Activated naive CD4-positive, alpha-beta T cell treated with anti-CD3 and anti-CD28 coated beads for 36 hours (primary cell): ENCODE measurements at regions of chr9 and their contacts with region 1.

Region 1: DNA sequence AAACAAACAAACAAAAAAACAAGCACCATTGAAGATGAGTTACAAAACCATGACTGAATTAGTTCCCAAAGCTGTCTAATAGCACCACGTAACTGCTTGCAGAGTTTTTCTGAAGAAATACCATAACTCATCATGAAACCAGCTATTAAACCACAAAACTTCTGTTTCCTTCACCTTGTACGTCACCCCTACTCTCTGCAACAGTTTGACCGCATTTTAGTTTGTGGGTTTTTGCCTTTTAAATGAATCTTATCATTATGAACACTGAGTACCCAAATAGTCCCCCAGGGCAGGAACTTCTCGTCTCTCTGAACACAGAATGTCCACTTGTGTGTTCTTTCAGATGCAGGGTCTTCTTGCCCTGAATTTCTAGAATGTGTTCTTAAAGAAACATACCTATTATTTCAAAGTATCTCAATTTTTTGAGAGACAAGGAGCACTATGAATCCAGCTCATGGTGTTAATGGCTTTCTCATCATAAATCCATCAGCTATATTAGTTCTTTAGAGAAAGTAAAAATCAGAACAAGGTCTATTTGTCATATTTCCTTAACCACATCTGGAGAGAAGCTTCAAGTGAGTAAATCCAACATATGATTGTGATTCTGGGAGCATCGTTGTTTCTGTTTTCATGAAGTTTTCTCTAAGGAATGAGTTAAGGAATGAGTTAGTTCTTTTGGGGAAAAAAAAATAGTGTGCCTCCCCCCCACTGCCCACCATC is 210.6 kb downstream of the AUH start:
- DNase-seq: peak; percentile 66
- H3K4me3 Mint-ChIP-seq: peak overlapping the region; percentile 15
- H3K27ac Mint-ChIP-seq: peak overlapping the region; percentile 89
- H3K4me1 Mint-ChIP-seq: peaks cover 62% of the 10 kb centered on the region
- H3K27me3 Mint-ChIP-seq: peaks cover 2% of the 10 kb centered on the region

Region 2: GRCh38 chr9:91071185-91071990 is 79.8 kb before region 1 on chr9:
- CTCF ChIA-PET with region 1: interaction called, 3 read pairs
- intact Hi-C with region 1: loop called (anchors 1 kb)
- DNase-seq: peak; percentile 85
- H3K4me3 Mint-ChIP-seq: no peak overlapping the region
- H3K27ac Mint-ChIP-seq: peak overlapping the region; percentile 57
- H3K4me1 Mint-ChIP-seq: peaks cover 11% of the 10 kb centered on the region
- H3K27me3 Mint-ChIP-seq: peaks cover 13% of the 10 kb centered on the region

Region 3: DNA sequence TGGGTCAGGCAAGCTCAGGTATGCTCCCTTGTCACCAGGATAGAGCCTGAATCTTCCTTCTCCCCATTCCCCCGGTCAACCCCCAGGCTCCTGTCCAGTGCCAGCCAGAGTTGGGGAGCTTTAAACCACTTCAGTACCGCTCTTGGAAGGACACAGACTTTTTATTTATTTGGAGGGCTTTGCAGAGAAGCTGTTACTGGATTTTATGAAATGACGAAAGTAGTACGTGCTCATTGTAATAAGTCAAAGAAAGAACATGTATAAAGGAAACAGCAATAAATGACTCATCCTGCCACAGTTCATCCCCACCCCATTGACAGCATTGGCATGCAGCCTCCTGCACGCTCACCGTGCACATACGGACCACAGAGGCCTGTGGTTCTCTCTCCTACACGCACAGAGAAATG is 19.7 kb before region 1 on chr9:
- CTCF ChIA-PET with region 1: interaction called, 10 read pairs
- intact Hi-C with region 1: loop called (anchors 1 kb)
- DNase-seq: peak; percentile 86
- H3K4me3 Mint-ChIP-seq: no peak overlapping the region
- H3K27ac Mint-ChIP-seq: peak overlapping the region; percentile 82
- H3K4me1 Mint-ChIP-seq: peaks cover 15% of the 10 kb centered on the region
- H3K27me3 Mint-ChIP-seq: peaks cover 11% of the 10 kb centered on the region

Region 4: GRCh38 chr9:91359734-91360470 is 208.7 kb after region 1 on chr9:
- CTCF ChIA-PET with region 1: interaction called, 7 read pairs
- intact Hi-C with region 1: loop called (anchors 1 kb)
- DNase-seq: no peak
- H3K4me3 Mint-ChIP-seq: peak overlapping the region; percentile 91
- H3K27ac Mint-ChIP-seq: peak overlapping the region; percentile 54
- H3K4me1 Mint-ChIP-seq: peaks cover 47% of the 10 kb centered on the region
- H3K27me3 Mint-ChIP-seq: no peaks in the 10 kb centered on the region

Region 5: GRCh38 chr9:91415290-91415689 is 264.1 kb after region 1 on chr9:
- CTCF ChIA-PET with region 1: no interaction called
- intact Hi-C with region 1: loop called (anchors 1 kb)
- DNase-seq: peak; percentile 56
- H3K4me3 Mint-ChIP-seq: no peak overlapping the region
- H3K27ac Mint-ChIP-seq: peak overlapping the region; percentile 80
- H3K4me1 Mint-ChIP-seq: peaks cover 69% of the 10 kb centered on the region
- H3K27me3 Mint-ChIP-seq: peaks cover 2% of the 10 kb centered on the region